Activated B cell treated with CpG ODN at 0.5 μM for 24 hours (primary cell): ENCODE measurements at regions of chr6 and their contacts with region 1.

Region 1: DNA sequence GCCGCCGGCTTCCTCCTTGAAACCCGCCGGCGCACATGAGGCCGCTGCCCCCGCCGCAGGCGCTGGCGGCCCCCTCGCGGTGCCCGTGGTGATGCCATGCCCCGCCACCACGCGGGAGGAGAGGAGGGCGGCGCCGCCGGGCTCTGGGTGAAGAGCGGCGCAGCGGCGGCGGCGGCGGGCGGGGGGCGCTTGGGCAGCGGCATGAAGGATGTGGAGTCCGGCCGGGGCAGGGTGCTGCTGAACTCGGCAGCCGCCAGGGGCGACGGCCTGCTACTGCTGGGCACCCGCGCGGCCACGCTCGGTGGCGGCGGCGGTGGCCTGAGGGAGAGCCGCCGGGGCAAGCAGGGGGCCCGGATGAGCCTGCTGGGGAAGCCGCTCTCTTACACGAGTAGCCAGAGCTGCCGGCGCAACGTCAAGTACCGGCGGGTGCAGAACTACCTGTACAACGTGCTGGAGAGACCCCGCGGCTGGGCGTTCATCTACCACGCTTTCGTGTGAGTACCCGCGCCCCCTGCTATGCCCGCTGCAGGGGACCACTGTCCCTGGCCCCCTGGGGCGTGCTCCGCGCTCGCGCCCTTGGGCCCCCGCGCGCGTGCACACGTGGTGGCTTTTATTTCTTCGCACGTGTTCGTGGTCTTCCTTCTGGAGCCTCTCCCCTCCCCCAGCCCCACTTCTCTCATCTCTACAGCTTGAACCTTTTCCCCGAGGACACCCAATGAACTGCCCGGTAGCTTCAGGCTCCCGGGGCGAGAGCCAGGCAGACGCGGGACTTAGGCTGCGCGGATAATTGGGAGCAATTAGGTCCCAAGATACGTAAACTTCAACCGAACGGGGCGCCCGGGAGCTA is 453 bp downstream of the KCNQ5 start:
- DNase-seq: peak; percentile 72
- ATAC-seq: peak; percentile 54
- H3K4me3 Mint-ChIP-seq: peak overlapping the region; percentile 96
- H3K27ac Mint-ChIP-seq: peak overlapping the region; percentile 93
- H3K4me1 Mint-ChIP-seq: peaks cover 52% of the 10 kb centered on the region
- H3K27me3 Mint-ChIP-seq: no peaks in the 10 kb centered on the region
- CTCF ChIP-seq: no peak

Region 2: GRCh38 chr6:72533606-72534005 is 88.7 kb before region 1 on chr6:
- CTCF ChIA-PET with region 1: no interaction called
- POLR2A ChIA-PET with region 1: no interaction called
- intact Hi-C with region 1: no loop called
- DNase-seq: no peak
- ATAC-seq: no peak
- H3K4me3 Mint-ChIP-seq: no peak overlapping the region
- H3K27ac Mint-ChIP-seq: no peak overlapping the region
- H3K4me1 Mint-ChIP-seq: no peaks in the 10 kb centered on the region
- H3K27me3 Mint-ChIP-seq: peaks cover 15% of the 10 kb centered on the region
- CTCF ChIP-seq: no peak

Region 3: DNA sequence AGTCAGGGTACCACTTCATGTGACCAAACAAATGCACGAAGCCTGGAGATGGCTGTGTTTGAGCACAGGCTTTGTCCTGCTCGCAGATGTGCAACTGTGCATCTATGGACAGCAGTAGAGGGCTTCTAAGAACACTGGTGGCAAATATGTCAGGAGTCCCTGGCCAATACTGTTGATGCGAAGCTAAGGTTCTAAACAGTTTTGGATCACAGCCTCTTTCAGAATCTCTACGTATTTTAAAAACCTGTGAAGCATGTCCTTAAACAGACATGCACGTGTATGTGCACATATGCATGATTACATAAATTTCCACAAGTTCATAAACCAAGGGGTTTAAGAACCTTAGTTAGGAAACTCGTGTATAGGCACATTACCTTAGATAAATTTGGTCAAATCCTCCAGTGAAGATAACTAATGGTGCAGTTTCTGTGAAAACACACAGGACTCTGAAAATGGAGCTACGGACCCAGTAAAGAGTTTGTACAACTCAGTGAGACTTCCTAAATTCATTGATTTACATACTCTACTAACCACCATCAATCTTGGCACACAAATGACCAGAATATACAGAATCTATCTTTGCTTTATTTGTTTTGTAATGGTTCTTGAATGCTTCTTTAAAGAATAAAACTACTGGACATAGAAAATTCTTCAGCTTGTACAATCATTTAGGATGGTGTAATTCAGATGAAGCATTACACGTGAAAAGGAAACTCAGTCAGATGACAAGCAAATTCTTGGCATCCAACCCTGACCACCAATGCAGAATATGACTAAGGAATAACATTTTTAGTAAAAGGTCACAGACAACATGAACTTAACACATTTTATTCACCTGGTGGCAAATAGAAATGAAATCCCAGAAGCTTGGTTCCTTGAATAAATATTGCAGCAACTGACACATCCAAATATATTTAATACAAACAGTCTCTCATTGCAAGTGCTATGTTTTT is 27.0 kb after region 1 on chr6:
- CTCF ChIA-PET with region 1: interaction called, 7 read pairs
- POLR2A ChIA-PET with region 1: interaction called, 39 read pairs
- intact Hi-C with region 1: loop called (anchors 1 kb)
- DNase-seq: no peak
- ATAC-seq: peak; percentile 54
- H3K4me3 Mint-ChIP-seq: peak overlapping the region; percentile 61
- H3K27ac Mint-ChIP-seq: peak overlapping the region; percentile 83
- H3K4me1 Mint-ChIP-seq: peaks cover 64% of the 10 kb centered on the region
- H3K27me3 Mint-ChIP-seq: no peaks in the 10 kb centered on the region
- CTCF ChIP-seq: no peak

Region 4: DNA sequence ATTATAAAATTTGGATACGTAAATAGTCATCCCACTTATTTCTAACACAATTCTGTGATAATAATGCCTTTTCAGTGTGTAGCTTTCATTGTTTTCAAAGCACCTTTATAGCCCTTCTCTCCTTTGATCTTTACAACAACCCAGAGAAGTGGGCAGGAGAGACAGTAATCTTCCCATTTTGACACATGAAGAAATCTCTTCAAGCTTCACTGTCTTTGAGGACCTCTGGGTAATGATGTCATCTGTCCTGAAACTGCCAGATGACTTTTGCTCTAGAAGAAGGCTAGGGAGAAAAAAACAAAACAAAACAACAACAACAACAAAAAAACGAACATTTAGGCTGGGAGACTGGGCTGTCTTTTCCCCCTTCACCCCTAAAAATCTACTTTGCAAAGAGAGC is 202.5 kb after region 1 on chr6:
- CTCF ChIA-PET with region 1: no interaction called
- POLR2A ChIA-PET with region 1: no interaction called
- intact Hi-C with region 1: loop called (anchors 5 kb)
- DNase-seq: no peak
- ATAC-seq: no peak
- H3K4me3 Mint-ChIP-seq: no peak overlapping the region
- H3K27ac Mint-ChIP-seq: no peak overlapping the region
- H3K4me1 Mint-ChIP-seq: peaks cover 25% of the 10 kb centered on the region
- H3K27me3 Mint-ChIP-seq: no peaks in the 10 kb centered on the region
- CTCF ChIP-seq: no peak

Region 5: DNA sequence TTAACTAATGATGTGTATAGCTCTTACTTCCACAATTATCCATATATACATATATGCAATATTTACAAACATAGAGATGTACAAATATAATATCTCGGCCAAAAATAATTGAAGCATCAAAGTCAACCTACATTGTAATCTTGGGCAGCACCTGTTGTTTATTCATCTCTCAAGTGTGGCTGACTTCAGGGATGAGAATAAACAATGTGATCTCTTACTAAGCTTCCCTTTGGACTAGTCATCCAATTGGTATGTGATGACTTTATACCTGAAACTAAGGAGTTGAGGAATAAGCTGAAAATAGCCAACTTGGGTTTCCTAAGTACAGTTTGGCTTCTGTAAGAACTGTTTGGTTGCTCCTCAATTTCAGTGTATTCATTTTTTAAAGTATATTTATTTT is 346.4 kb after region 1 on chr6:
- CTCF ChIA-PET with region 1: no interaction called
- POLR2A ChIA-PET with region 1: no interaction called
- intact Hi-C with region 1: no loop called
- DNase-seq: no peak
- ATAC-seq: no peak
- H3K4me3 Mint-ChIP-seq: no peak overlapping the region
- H3K27ac Mint-ChIP-seq: no peak overlapping the region
- H3K4me1 Mint-ChIP-seq: no peaks in the 10 kb centered on the region
- H3K27me3 Mint-ChIP-seq: no peaks in the 10 kb centered on the region
- CTCF ChIP-seq: no peak

Region 6: GRCh38 chr6:73129653-73130443 is 507.5 kb after region 1 on chr6:
- CTCF ChIA-PET with region 1: interaction called, 423 read pairs
- POLR2A ChIA-PET with region 1: interaction called, 20 read pairs
- intact Hi-C with region 1: loop called (anchors 1 kb)
- DNase-seq: peak; percentile 72
- ATAC-seq: peak; percentile 90
- H3K4me3 Mint-ChIP-seq: peak overlapping the region; percentile 33
- H3K27ac Mint-ChIP-seq: no peak overlapping the region
- H3K4me1 Mint-ChIP-seq: peaks cover 4% of the 10 kb centered on the region
- H3K27me3 Mint-ChIP-seq: no peaks in the 10 kb centered on the region
- CTCF ChIP-seq: peak; percentile 8

Region 7: DNA sequence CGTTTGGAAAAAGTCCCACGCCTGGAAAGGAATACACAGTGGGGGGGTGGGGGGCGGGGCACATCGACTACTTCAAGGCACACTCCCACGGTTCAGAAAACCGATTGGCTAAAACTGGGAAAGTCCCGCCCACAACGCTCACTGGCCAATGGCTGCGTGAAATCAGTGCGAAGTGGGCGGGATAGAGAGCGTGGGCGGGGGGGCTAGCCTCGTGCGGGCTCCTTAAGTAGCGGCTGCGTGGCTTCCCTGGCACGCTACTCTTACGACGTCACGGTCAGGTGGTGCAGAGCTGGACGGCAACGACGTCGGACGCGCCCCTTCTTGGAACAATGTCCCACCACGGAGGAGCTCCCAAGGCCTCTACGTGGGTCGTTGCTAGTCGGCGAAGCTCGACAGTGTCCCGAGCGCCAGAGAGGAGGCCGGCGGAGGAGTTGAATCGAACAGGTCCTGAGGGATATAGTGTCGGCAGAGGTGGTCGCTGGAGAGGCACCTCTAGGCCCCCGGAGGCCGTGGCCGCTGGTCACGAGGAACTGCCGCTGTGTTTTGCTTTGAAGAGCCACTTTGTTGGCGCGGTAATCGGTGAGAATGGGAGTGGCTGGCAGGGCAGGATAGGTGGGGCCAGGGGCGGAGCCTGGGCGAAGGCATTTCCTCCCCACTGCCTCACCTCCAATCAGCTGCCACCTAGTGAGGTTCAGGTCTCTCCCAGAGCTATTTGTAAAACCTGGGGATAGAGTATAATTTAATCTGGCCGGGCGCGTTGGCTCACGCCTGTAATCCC is 772.4 kb after region 1 on chr6 and contains the start of gene DDX43:
- CTCF ChIA-PET with region 1: no interaction called
- POLR2A ChIA-PET with region 1: no interaction called
- intact Hi-C with region 1: loop called (anchors 10 kb)
- DNase-seq: peak; percentile 22
- ATAC-seq: peak; percentile 80
- H3K4me3 Mint-ChIP-seq: peak within 1 kb of the TSS; percentile 78
- H3K27ac Mint-ChIP-seq: peak within 1 kb of the TSS; percentile 85
- H3K4me1 Mint-ChIP-seq: no peaks in the 10 kb centered on the region
- H3K27me3 Mint-ChIP-seq: no peaks in the 10 kb centered on the region
- CTCF ChIP-seq: no peak
- total RNA-seq, gene DDX43: 1.4 and 1.6 TPM in 2 replicates

Region 8: DNA sequence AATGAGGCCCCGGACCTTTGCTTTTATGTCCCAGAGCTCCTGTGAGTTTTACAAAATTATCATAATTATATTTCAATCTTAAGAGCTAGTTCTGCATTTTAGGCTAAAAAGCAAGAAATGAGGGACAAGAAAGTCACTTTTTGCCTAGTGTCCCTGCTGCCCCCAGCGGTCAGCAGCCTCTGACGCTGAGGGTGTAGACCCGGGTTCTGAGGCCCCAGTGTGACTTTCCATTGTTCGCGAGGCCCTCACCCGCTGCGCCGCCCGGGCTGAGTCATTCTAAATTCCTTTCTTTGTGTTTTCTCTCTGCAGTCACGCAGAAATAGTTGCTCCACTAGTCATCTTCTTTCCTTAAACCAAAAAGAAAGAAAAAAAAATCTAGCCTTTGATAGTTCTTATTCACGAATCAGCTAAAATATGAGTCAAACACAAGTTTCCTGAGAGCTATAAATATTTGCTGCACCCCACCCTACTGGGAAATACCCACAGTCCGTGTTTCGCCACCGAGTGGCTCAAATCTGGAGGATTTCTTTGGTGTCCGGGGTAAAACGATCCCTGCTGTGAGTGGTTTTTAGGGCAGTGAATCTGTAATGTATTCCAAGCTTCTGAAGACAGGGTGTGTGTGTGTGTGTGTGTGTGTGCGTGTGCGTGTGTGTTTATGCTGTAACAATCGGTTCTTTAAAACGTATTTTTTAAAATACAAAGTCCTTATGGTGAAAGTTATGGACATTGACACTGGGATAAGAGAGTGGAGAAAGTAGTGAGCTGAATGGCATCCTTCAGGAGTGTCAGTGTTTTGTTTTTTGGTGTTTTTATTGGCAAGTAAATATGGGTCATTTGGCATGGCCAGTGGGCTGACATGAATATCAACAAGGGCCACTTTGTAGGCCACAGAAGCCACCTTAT is 958.2 kb after region 1 on chr6:
- CTCF ChIA-PET with region 1: no interaction called
- POLR2A ChIA-PET with region 1: no interaction called
- intact Hi-C with region 1: loop called (anchors 5 kb)
- DNase-seq: peak; percentile 54
- ATAC-seq: peak; percentile 74
- H3K4me3 Mint-ChIP-seq: peak overlapping the region; percentile 80
- H3K27ac Mint-ChIP-seq: peak overlapping the region; percentile 98
- H3K4me1 Mint-ChIP-seq: peaks cover 48% of the 10 kb centered on the region
- H3K27me3 Mint-ChIP-seq: no peaks in the 10 kb centered on the region
- CTCF ChIP-seq: no peak